ENCODE measurements at regions of chr12 and their contacts with region 1.

Region 1: GRCh38 chr12:123043536-123044001 is 63.1 kb downstream of the ARL6IP4 start:
- DNase-seq: peak; percentile 75
- H3K4me3 ChIP-seq: no peak overlapping the region
- H3K27ac ChIP-seq: no peak overlapping the region
- H3K4me1 ChIP-seq: no peaks in the 10 kb centered on the region
- H3K27me3 ChIP-seq: no peaks in the 10 kb centered on the region
- CTCF ChIP-seq: peak; percentile 63 to 84
- POLR2A ChIP-seq: no peak

Region 2: GRCh38 chr12:123058980-123059379 is 15.4 kb after region 1 on chr12:
- CTCF ChIA-PET with region 1: interaction called, 20 read pairs
- POLR2A ChIA-PET with region 1: no interaction called
- dilution Hi-C with region 1: no loop called
- intact Hi-C with region 1: no loop called
- DNase-seq: no peak
- H3K4me3 ChIP-seq: no peak overlapping the region
- H3K27ac ChIP-seq: no peak overlapping the region
- H3K4me1 ChIP-seq: peaks cover 3% of the 10 kb centered on the region
- H3K27me3 ChIP-seq: no peaks in the 10 kb centered on the region
- CTCF ChIP-seq: no peak
- POLR2A ChIP-seq: no peak

Region 3: DNA sequence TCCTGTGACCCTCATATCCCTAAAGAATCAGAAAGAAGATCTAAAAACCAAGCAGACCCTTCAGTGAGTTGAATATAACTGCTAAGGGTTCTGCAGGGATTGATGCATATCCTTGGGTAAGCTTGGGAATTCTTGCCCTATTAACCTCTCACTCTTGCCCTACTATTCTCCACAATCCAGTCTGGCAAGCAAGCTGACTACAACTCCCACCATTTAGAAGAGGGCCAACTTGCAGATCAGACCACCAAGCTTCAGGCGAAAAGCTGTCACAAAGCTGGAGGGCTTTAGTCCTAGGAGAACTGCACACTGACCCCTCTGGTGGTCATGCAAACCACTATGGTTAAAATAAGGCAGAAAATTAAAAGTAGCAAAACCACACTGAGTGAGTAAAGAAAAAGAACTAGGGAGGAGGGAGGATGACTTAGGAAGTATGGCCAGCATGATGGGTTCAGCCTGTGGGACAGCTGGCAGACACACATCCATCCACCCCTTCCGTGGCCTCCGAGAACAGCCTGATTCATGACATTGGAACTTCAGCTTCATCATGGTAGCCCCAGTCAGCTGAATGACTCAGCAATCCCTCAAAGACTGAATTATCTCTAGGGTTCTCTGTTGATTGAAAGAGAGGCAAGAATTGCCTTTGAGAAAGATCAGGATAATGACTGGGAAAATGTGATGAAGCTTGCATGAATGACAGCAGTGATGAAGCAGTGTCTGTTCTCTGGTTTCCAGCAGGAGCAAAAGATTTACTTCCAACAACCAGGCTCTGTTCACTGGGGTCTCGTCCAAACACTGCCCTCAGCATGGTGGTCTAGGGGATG is 82.8 kb after region 1 on chr12:
- CTCF ChIA-PET with region 1: interaction called, 21 read pairs
- POLR2A ChIA-PET with region 1: no interaction called
- dilution Hi-C with region 1: no loop called
- intact Hi-C with region 1: no loop called
- DNase-seq: peak; percentile 75
- H3K4me3 ChIP-seq: no peak overlapping the region
- H3K27ac ChIP-seq: peak overlapping the region; percentile 64
- H3K4me1 ChIP-seq: peaks cover 13% of the 10 kb centered on the region
- H3K27me3 ChIP-seq: no peaks in the 10 kb centered on the region
- CTCF ChIP-seq: peak in 1 of 2 donors; percentile 21
- POLR2A ChIP-seq: no peak

Region 4: GRCh38 chr12:123150744-123151456 is 107.3 kb after region 1 on chr12 and contains the start of gene PITPNM2:
- CTCF ChIA-PET with region 1: interaction called, 108 read pairs
- POLR2A ChIA-PET with region 1: no interaction called
- dilution Hi-C with region 1: no loop called
- intact Hi-C with region 1: loop called (anchors 1 kb)
- DNase-seq: peak; percentile 41
- H3K4me3 ChIP-seq: peak within 1 kb of the TSS; percentile 61 to 72 (median 66)
- H3K27ac ChIP-seq: no peak within 1 kb of the TSS
- H3K4me1 ChIP-seq: peaks cover 14% of the 10 kb centered on the region
- H3K27me3 ChIP-seq: no peaks in the 10 kb centered on the region
- CTCF ChIP-seq: no peak
- POLR2A ChIP-seq: no peak
- total RNA-seq, gene PITPNM2: 15.9 and 21.4 TPM in 2 replicates

Region 5: GRCh38 chr12:123621619-123622530 is 578.3 kb after region 1 on chr12:
- CTCF ChIA-PET with region 1: no interaction called
- POLR2A ChIA-PET with region 1: no interaction called
- dilution Hi-C with region 1: no loop called
- intact Hi-C with region 1: loop called (anchors 5 kb)
- DNase-seq: no peak
- H3K4me3 ChIP-seq: no peak overlapping the region
- H3K27ac ChIP-seq: no peak overlapping the region
- H3K4me1 ChIP-seq: no peaks in the 10 kb centered on the region
- H3K27me3 ChIP-seq: no peaks in the 10 kb centered on the region
- CTCF ChIP-seq: no peak
- POLR2A ChIP-seq: no peak